CD8-positive, alpha-beta memory T cell (primary cell): ENCODE measurements at regions of chr12 and their contacts with region 1.

Region 1: DNA sequence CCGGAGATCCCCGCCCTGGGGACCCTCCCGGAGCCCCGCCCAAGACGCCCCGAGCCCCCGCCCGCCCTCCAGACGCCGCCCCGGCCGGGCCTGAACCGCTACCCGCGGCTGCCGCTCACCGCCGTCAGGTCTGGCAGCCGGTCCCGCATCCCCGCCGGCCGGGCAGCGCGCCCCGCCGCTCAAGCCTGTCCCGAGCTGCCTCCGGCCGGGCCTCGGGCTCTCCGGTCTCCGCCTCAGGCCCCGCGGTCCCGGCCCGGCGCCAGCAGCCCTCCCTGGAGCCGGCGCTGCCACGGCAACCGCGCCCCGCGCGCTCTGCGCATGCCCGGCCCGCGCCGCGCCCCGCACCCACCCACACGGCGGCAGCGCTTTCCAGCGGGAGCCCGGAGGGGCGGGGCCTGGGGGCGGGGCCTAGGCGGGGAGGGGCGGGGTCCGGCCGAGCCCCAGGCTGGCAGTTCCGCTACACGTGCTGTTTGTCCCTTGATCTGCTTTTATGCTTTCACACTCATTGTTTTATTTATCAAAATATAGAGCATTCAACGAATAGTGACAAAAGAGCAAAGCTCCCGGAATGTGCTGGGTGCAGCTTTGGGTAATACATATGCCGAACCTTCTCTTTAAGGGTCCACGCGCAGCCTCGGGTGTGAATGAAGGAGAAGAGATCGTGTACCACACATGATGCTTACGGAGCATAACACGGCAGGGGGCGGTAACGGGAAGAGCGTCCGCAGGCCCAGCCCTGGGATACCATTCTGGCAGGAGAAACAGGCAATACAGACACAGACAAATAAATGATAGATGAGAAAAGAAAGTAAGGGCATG is at the start of gene STX2:
- DNase-seq: peak; percentile 87 to 93 (median 89)
- H3K4me3 ChIP-seq: peak within 1 kb of the TSS; percentile 79
- H3K4me3 Mint-ChIP-seq: peak within 1 kb of the TSS; percentile 83 to 89 (median 85)
- H3K27ac ChIP-seq: peak within 1 kb of the TSS; percentile 59
- H3K27ac Mint-ChIP-seq: peak within 1 kb of the TSS; percentile 34 to 95 (median 82)
- H3K4me1 ChIP-seq: peaks cover 19% of the 10 kb centered on the region
- H3K4me1 Mint-ChIP-seq: peaks cover 25 to 29% (median 26%) of the 10 kb centered on the region in 3 donors
- H3K27me3 ChIP-seq: no peaks in the 10 kb centered on the region
- H3K27me3 Mint-ChIP-seq: no peaks in the 10 kb centered on the region
- total RNA-seq, gene STX2: 22.1 to 23.0 TPM

Region 2: GRCh38 chr12:130474599-130475269 is 364.4 kb before region 1 on chr12:
- CTCF ChIA-PET with region 1: no interaction called
- POLR2A ChIA-PET with region 1: no interaction called
- DNase-seq: no peak
- H3K4me3 ChIP-seq: no peak overlapping the region
- H3K4me3 Mint-ChIP-seq: no peak overlapping the region
- H3K27ac ChIP-seq: no peak overlapping the region
- H3K27ac Mint-ChIP-seq: no peak overlapping the region
- H3K4me1 ChIP-seq: no peaks in the 10 kb centered on the region
- H3K4me1 Mint-ChIP-seq: no peaks in the 10 kb centered on the region
- H3K27me3 ChIP-seq: no peaks in the 10 kb centered on the region
- H3K27me3 Mint-ChIP-seq: no peaks in the 10 kb centered on the region

Region 3: DNA sequence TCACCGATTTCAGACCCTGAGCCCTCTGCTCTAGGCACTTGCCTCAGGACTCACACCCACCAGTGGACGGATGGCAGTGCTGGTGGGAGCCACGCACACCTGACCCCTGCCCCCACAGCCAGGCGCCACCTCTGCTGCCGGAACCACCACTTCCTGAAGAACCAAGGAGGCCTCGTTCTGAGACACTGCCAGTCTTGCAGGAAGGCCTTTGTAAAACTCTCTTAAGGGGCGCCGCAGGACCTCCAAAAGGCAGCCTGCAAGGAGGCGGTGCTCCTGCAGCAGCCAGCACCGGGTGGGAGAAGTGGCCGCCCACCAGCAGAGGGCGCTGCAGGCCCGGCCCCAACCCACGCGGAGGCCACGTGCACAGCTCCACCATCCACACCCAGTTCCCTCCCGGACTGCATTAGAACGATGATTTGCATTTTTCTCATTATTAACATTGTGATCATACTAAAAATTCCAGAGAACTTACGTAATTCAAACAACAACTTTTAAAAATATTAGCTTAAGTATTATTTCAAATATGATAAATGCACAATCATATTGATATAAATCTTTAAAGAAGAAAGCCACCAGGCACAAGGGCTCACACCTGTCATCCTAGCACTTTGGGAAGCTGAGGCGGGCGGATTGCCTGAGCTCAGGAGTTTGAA is 12.9 kb before region 1 on chr12:
- CTCF ChIA-PET with region 1: interaction called, 40 read pairs
- POLR2A ChIA-PET with region 1: no interaction called
- DNase-seq: peak; percentile 62 to 84 (median 67)
- H3K4me3 ChIP-seq: no peak overlapping the region
- H3K4me3 Mint-ChIP-seq: no peak overlapping the region
- H3K27ac ChIP-seq: no peak overlapping the region
- H3K27ac Mint-ChIP-seq: peak overlapping the region in 4 of 8 donors; percentile 17 to 92 (median 52)
- H3K4me1 ChIP-seq: no peaks in the 10 kb centered on the region
- H3K4me1 Mint-ChIP-seq: peaks cover 12 to 37% (median 28%) of the 10 kb centered on the region in 3 donors
- H3K27me3 ChIP-seq: no peaks in the 10 kb centered on the region
- H3K27me3 Mint-ChIP-seq: peaks cover 0 to 3% of the 10 kb centered on the region in 2 donors

Region 4: DNA sequence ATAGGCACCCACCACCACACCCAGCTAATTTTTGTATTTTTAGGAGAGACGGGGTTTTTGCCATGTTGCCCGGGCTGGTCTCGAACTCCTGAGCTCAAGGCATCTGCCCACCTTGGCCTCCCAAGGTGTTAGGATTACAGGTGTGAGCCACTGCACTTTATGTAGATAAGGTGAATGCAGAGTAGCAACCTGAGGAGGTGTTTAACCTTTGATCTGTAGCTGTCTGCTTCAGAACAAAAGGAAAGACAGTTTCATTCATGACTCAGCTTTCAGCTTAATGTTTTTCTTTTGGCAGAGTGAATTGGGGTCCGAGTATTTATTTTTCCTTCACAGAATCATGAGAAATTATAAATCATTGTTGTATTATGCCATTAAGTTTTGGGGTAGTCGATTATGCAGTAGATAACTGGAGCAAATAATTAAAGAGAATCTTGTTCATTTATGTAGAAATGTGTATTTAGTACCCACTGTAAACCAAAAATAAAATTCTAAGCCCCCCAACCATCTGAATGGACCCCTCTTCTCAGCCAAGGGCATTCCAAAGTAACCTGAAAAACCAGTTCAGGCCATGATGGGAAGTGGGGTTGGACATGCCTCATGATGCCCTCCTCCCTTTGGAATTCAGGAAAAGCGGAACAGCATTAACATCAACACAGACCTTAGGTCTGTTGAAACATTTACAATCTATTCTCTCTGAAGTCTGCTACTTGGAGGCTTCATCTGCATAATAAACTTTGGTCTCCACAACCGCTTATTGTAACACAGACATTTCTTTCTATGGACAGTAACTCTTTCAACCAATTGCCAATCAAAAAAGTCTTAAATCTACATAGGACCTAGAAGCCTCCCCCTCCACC is 10.6 kb after region 1 on chr12:
- CTCF ChIA-PET with region 1: no interaction called
- POLR2A ChIA-PET with region 1: no interaction called
- DNase-seq: no peak
- H3K4me3 ChIP-seq: no peak overlapping the region
- H3K4me3 Mint-ChIP-seq: no peak overlapping the region
- H3K27ac ChIP-seq: no peak overlapping the region
- H3K27ac Mint-ChIP-seq: no peak overlapping the region
- H3K4me1 ChIP-seq: no peaks in the 10 kb centered on the region
- H3K4me1 Mint-ChIP-seq: no peaks in the 10 kb centered on the region
- H3K27me3 ChIP-seq: no peaks in the 10 kb centered on the region
- H3K27me3 Mint-ChIP-seq: peaks cover 8 to 18% of the 10 kb centered on the region in 2 donors

Region 5: GRCh38 chr12:130871286-130872178 is 32.4 kb after region 1 on chr12 and contains the start of gene RAN:
- CTCF ChIA-PET with region 1: interaction called, 18 read pairs
- POLR2A ChIA-PET with region 1: interaction called, 4 read pairs
- DNase-seq: peak; percentile 88 to 95 (median 91)
- H3K4me3 ChIP-seq: peak within 1 kb of the TSS; percentile 73
- H3K4me3 Mint-ChIP-seq: peak within 1 kb of the TSS; percentile 90 to 95 (median 93)
- H3K27ac ChIP-seq: peak within 1 kb of the TSS; percentile 93
- H3K27ac Mint-ChIP-seq: peak within 1 kb of the TSS; percentile 92 to 96 (median 94)
- H3K4me1 ChIP-seq: peaks cover 53% of the 10 kb centered on the region
- H3K4me1 Mint-ChIP-seq: peaks cover 47 to 67% (median 50%) of the 10 kb centered on the region in 3 donors
- H3K27me3 ChIP-seq: no peaks in the 10 kb centered on the region
- H3K27me3 Mint-ChIP-seq: peaks cover 0 to 5% of the 10 kb centered on the region in 2 donors
- total RNA-seq, gene RAN: 2,623 to 2,680 TPM